B cell (primary cell): ENCODE measurements at regions of chr20 and their contacts with region 1.

Region 1: GRCh38 chr20:47272893-47273590 is 83.5 kb downstream of the ZMYND8 start:
- DNase-seq: peak; percentile 79
- ATAC-seq: peak; percentile 86
- H3K4me3 ChIP-seq: no peak overlapping the region
- H3K4me3 Mint-ChIP-seq: no peak overlapping the region
- H3K27ac ChIP-seq: no peak overlapping the region
- H3K27ac Mint-ChIP-seq: peak overlapping the region; percentile 74
- H3K4me1 ChIP-seq: peaks cover 0 to 5% of the 10 kb centered on the region in 2 donors
- H3K4me1 Mint-ChIP-seq: peaks cover 25% of the 10 kb centered on the region
- H3K27me3 ChIP-seq: no peaks in the 10 kb centered on the region
- H3K27me3 Mint-ChIP-seq: no peaks in the 10 kb centered on the region
- CTCF ChIP-seq: peak; percentile 95

Region 2: DNA sequence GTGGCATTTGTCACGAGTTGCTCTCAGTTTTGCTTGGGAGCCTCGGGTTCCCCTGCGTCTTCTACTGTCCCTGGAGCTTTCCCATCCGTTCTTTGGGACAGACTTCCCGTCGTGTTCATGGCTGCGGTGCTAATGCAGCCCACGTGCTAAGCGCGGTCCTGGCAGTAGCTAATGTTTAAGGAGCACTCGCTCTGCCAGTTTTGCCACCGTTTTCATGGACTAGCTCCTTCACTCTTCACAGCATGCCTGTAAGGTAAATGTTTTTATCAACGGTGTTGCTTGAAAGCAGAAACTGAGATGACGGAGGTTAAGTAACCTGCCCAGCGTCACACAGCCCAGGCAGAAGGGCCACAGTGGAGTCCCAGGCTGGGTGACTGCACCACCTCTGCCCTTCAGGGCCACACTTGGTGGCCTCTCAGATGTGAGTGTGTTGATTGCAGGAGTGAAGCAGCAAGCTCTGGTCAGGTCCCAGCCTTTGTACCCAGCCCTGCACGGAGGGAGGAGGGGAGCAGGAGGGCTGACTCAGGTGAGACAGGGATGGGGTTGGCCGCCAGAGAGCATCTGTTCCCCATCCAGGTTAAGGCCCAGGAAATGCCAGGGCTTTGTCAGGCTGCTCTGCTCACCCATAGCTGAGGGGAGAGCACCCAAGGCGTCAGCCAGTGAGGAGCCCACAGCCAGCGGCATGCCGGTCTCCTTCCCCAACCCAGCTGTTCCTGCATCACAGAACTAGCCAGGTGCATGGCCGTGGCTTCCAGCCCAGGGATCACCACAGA is 98.4 kb before region 1 on chr20:
- CTCF ChIA-PET with region 1: no interaction called
- POLR2A ChIA-PET with region 1: no interaction called
- intact Hi-C with region 1: no loop called
- DNase-seq: no peak
- ATAC-seq: no peak
- H3K4me3 ChIP-seq: no peak overlapping the region
- H3K4me3 Mint-ChIP-seq: no peak overlapping the region
- H3K27ac ChIP-seq: no peak overlapping the region
- H3K27ac Mint-ChIP-seq: no peak overlapping the region
- H3K4me1 ChIP-seq: no peaks in the 10 kb centered on the region
- H3K4me1 Mint-ChIP-seq: no peaks in the 10 kb centered on the region
- H3K27me3 ChIP-seq: peaks cover 0 to 4% (median 1%) of the 10 kb centered on the region in 4 experiments
- H3K27me3 Mint-ChIP-seq: peaks cover 15% of the 10 kb centered on the region
- CTCF ChIP-seq: no peak

Region 3: DNA sequence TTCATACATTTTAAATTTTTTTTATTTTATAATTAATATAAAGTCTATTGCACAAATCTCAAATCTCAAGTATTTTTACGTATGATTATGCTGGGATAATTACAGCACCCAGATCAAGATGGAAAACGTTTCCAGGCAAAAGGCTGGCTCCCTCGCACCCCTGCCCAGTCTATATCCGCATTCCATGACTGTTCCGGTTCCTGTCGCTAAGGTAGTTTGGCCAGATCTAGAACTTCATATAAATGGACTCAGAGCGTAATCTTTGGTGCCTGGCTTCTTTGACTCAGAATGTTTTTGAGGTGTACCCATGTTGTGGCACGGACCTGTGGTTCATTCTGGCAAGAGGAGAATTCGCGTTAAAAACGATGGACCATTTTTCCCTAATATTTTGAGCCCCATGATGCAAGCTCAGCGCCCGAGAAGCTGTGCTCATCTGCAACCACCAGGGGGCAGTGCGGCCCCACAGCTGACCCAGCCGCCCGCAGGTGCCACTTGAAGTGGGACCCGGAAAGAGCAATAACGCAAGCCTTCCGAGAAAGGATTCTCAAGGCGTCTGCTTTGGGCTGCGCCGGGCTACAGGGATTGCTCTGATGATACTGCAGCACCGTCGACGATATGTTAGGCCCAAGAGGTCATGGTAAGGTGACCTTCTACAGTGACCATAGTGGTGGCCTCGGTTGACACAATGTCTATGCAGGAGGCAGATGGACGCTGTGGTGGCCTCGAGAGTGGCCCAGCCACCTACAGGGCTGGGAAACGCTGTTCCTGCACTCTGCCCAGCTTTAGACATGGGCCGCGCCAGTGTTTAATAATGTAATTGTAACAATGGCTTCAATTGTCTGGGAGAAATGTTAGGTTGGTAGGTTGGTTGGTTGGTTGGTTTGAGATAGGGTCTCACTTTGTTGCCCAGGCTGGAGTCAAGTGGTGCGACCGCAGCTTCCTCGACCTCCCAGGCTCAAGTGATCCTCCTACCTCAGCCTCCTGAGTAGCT is 76.7 kb before region 1 on chr20:
- CTCF ChIA-PET with region 1: interaction called, 15 read pairs
- POLR2A ChIA-PET with region 1: no interaction called
- intact Hi-C with region 1: loop called (anchors 1 kb)
- DNase-seq: peak; percentile 81
- ATAC-seq: peak; percentile 82
- H3K4me3 ChIP-seq: peak overlapping the region in 2 of 5 experiments; percentile 12 to 33
- H3K4me3 Mint-ChIP-seq: peak overlapping the region; percentile 16
- H3K27ac ChIP-seq: no peak overlapping the region
- H3K27ac Mint-ChIP-seq: no peak overlapping the region
- H3K4me1 ChIP-seq: peaks cover 3 to 7% of the 10 kb centered on the region in 2 donors
- H3K4me1 Mint-ChIP-seq: peaks cover 5% of the 10 kb centered on the region
- H3K27me3 ChIP-seq: no peaks in the 10 kb centered on the region
- H3K27me3 Mint-ChIP-seq: no peaks in the 10 kb centered on the region
- CTCF ChIP-seq: peak; percentile 100

Region 4: DNA sequence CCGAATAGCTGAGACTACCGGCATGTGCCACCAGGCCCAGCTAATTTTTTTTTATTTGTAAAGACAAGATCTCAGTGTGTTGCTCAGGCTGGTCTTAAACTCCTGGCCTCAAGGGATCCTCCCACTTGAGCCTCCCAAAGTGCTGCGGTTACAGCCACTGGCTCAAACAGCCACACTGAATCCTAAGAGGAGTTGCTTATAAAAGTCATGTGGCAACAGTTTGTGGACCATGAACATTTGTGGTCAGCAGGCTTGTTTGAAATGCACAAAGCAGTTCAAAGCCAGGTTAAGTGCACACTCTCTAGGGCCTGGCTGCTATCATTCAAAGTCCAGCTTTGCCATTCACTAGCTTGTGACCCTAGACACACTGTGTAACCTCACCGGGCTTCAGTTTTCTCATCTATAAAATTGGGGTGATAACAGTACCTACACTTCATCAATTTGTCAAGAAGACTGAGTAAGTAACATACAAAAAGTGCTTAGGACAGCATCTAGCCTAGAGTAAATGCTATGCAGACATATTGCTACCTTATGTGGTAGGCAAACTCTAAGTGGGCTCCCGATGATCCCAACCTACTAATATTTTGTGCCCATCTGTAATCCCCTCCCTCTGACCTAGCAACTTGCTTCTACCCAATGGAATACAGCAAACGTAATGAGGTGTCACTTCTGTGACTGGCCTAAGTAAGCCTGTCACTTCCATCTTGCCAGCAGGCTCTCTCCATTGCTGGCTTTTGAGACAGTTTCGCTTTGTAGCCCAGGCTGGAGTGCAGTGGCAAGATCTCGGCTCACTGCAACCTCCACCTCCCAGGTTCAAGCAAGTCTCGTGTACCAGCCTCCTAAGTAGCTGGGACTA is 39.5 kb before region 1 on chr20:
- CTCF ChIA-PET with region 1: no interaction called
- POLR2A ChIA-PET with region 1: no interaction called
- intact Hi-C with region 1: no loop called
- DNase-seq: no peak
- ATAC-seq: no peak
- H3K4me3 ChIP-seq: no peak overlapping the region
- H3K4me3 Mint-ChIP-seq: no peak overlapping the region
- H3K27ac ChIP-seq: no peak overlapping the region
- H3K27ac Mint-ChIP-seq: no peak overlapping the region
- H3K4me1 ChIP-seq: no peaks in the 10 kb centered on the region
- H3K4me1 Mint-ChIP-seq: no peaks in the 10 kb centered on the region
- H3K27me3 ChIP-seq: no peaks in the 10 kb centered on the region
- H3K27me3 Mint-ChIP-seq: no peaks in the 10 kb centered on the region
- CTCF ChIP-seq: no peak

Region 5: DNA sequence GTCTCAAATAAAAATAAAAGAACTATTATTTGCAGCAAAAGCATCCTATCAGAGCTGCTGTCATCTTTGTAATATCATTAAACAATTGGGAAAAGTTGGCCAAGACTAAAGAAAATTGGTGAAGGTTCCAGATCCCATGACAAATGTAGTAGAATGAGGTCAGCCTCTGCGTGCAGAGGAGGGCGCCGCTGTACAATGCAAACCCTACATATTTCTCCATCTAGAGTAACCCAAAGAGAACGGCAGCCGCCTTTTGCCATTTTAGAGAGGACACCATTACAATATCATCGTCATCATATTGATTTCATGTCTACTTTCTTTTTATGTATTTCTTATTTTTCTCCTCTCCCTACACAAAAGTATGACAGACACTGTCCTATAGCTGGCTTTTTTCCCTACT is 23.9 kb after region 1 on chr20:
- CTCF ChIA-PET with region 1: interaction called, 14 read pairs
- POLR2A ChIA-PET with region 1: no interaction called
- intact Hi-C with region 1: no loop called
- DNase-seq: peak; percentile 24
- ATAC-seq: peak; percentile 31
- H3K4me3 ChIP-seq: no peak overlapping the region
- H3K4me3 Mint-ChIP-seq: no peak overlapping the region
- H3K27ac ChIP-seq: no peak overlapping the region
- H3K27ac Mint-ChIP-seq: no peak overlapping the region
- H3K4me1 ChIP-seq: no peaks in the 10 kb centered on the region
- H3K4me1 Mint-ChIP-seq: no peaks in the 10 kb centered on the region
- H3K27me3 ChIP-seq: no peaks in the 10 kb centered on the region
- H3K27me3 Mint-ChIP-seq: no peaks in the 10 kb centered on the region
- CTCF ChIP-seq: peak; percentile 30

Region 6: GRCh38 chr20:47392015-47392720 is 119.1 kb after region 1 on chr20:
- CTCF ChIA-PET with region 1: interaction called, 556 read pairs
- POLR2A ChIA-PET with region 1: no interaction called
- intact Hi-C with region 1: no loop called
- DNase-seq: peak; percentile 54
- ATAC-seq: peak; percentile 71
- H3K4me3 ChIP-seq: no peak overlapping the region
- H3K4me3 Mint-ChIP-seq: peak overlapping the region; percentile 57
- H3K27ac ChIP-seq: peak overlapping the region; percentile 46 to 52
- H3K27ac Mint-ChIP-seq: peak overlapping the region; percentile 83
- H3K4me1 ChIP-seq: peaks cover 28 to 34% of the 10 kb centered on the region in 2 donors
- H3K4me1 Mint-ChIP-seq: peaks cover 37% of the 10 kb centered on the region
- H3K27me3 ChIP-seq: no peaks in the 10 kb centered on the region
- H3K27me3 Mint-ChIP-seq: no peaks in the 10 kb centered on the region
- CTCF ChIP-seq: no peak

Region 7: DNA sequence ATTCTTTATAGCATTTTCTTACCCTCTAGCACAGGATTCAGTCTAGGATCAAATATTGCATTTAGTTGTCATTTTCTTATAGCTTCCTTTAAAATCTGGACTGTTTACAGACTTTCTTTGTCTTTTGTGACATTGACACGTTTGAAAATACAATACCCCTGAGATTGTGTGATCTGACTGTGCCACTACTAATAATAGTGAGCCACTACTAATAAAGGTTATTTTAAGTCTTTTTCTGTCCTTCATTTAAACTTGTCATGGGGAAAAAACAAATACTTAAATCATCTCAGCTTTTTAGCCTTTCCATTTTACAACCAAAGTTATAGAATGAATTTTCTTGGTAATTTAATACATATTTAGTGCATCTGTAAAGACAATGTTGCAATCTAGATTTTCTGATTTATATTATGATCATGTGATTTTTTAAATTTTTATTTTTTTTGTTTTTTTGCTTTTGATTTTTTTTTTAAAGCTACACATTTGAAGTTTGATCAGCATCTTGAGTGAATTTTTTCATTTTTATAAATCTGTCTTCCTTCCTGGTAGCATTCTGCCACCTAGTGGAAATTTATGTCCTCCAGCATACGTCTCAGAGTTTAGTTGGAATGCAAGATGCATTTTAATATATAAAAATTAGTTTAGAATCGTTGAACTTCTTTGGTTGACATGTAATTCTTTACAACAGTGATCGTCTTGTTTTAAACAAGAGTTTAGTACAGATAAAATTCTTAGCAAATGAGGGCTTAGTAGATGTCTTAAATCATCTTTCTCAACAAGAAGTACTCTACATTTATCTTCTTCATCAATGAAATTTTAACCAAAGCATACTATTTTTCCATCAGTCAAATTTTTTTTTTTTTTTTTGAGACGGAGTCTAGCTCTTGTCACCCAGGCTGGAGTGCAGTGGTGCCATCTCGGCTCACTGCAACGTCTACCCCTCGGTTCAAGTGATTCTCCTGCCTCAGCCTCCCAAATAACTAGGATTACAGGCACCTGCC is 348.1 kb after region 1 on chr20:
- CTCF ChIA-PET with region 1: interaction called, 104 read pairs
- POLR2A ChIA-PET with region 1: no interaction called
- intact Hi-C with region 1: loop called (anchors 1 kb)
- DNase-seq: peak; percentile 68
- ATAC-seq: peak; percentile 31
- H3K4me3 ChIP-seq: no peak overlapping the region
- H3K4me3 Mint-ChIP-seq: no peak overlapping the region
- H3K27ac ChIP-seq: peak overlapping the region in 1 of 2 donors; percentile 72
- H3K27ac Mint-ChIP-seq: peak overlapping the region; percentile 28
- H3K4me1 ChIP-seq: peaks cover 6 to 8% of the 10 kb centered on the region in 2 donors
- H3K4me1 Mint-ChIP-seq: peaks cover 30% of the 10 kb centered on the region
- H3K27me3 ChIP-seq: no peaks in the 10 kb centered on the region
- H3K27me3 Mint-ChIP-seq: no peaks in the 10 kb centered on the region
- CTCF ChIP-seq: peak; percentile 94

Region 8: DNA sequence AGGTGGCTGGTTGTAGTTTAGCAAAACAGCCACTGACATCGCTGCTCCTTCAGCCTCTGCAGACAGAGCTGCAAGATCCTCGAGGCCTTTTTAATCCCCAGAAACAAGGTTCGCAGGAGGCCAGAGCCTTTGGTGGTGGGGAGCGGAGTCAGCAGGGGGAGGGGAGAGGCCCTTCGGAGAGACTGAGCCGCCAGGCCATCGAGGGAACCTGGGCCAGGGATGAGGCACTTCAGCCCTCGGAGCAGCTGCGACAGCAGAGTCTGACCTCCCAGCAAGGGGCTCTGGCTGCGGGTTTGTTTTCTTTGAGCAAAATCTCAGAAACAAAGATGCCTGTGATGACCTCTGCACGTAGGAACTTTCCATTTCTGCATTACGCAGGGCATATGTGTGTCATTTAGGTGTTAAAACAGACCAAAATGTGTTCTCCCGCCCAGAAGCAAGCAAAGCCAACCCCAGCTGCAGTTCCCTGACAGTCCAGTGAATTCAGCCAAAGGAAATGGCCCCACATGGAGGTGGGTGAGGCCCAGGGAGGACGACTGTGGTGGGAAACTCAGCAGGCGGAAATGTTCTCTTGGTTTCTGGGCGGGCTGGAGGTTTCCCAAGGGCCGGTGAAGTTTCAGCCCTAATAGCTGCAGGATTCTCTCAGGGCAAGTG is 683.4 kb after region 1 on chr20:
- CTCF ChIA-PET with region 1: no interaction called
- POLR2A ChIA-PET with region 1: no interaction called
- intact Hi-C with region 1: no loop called
- DNase-seq: no peak
- ATAC-seq: no peak
- H3K4me3 ChIP-seq: no peak overlapping the region
- H3K4me3 Mint-ChIP-seq: no peak overlapping the region
- H3K27ac ChIP-seq: no peak overlapping the region
- H3K27ac Mint-ChIP-seq: no peak overlapping the region
- H3K4me1 ChIP-seq: no peaks in the 10 kb centered on the region
- H3K4me1 Mint-ChIP-seq: no peaks in the 10 kb centered on the region
- H3K27me3 ChIP-seq: peaks cover 0 to 4% (median 0%) of the 10 kb centered on the region in 4 experiments
- H3K27me3 Mint-ChIP-seq: peaks cover 41% of the 10 kb centered on the region
- CTCF ChIP-seq: no peak

Region 9: DNA sequence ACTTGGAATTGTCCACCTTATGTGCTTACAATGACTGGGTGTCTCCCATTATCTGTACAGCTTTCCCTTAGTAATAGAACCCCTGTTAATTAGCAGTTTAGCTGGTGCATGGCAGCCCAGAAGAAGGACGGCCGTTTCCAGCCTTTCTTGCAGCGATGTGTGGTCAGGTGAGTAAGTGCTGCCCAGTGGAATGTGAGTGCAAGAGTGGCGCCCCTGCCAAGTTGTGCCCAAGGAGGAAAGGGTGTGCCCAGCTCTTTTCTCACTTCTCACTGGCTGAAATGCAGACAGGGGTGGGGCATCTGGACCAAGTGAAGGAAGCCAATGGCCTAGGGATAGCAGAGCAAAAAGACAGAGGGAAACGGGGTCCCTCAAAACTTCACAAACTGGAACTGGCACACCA is 1257.9 kb after region 1 on chr20:
- CTCF ChIA-PET with region 1: no interaction called
- POLR2A ChIA-PET with region 1: no interaction called
- intact Hi-C with region 1: no loop called
- DNase-seq: no peak
- ATAC-seq: no peak
- H3K4me3 ChIP-seq: no peak overlapping the region
- H3K4me3 Mint-ChIP-seq: no peak overlapping the region
- H3K27ac ChIP-seq: no peak overlapping the region
- H3K27ac Mint-ChIP-seq: no peak overlapping the region
- H3K4me1 ChIP-seq: no peaks in the 10 kb centered on the region
- H3K4me1 Mint-ChIP-seq: no peaks in the 10 kb centered on the region
- H3K27me3 ChIP-seq: no peaks in the 10 kb centered on the region
- H3K27me3 Mint-ChIP-seq: peaks cover 29% of the 10 kb centered on the region
- CTCF ChIP-seq: no peak